ENCODE measurements at regions of chr2 and their contacts with region 1.

Region 1: GRCh38 chr2:199704358-199705238 is 146.4 kb downstream of the FTCDNL1 start:
- DNase-seq: peak; percentile 31
- H3K4me3 ChIP-seq: no peak overlapping the region
- H3K27ac ChIP-seq: no peak overlapping the region
- H3K4me1 ChIP-seq: no peaks in the 10 kb centered on the region
- H3K27me3 ChIP-seq: no peaks in the 10 kb centered on the region
- CTCF ChIP-seq: peak; percentile 64 to 78

Region 2: DNA sequence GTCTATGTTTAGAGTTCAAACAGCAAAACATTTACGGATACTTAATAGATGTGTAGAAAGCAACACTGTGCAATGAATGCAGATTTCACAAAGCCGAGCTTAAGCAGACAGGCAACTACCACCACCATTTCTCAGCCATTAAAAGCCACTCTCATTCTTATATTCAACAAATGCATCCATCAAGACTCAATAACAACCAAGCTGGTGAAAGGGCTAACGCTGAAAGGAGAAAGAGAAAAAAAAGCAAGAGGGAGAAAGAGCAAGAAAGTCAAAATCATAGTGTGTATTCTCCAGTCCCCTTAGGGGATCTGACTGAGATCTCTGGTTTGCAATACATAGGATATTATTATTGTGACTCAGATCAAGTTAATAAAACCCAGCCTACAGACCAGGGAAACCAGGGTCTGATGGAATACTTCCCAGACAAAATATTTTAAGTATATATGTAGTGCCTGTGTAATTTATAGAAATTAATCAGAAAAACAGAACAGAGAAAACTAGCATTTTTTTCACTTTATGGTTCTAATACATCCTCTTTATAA is 260.9 kb before region 1 on chr2:
- CTCF ChIA-PET with region 1: no interaction called
- dilution Hi-C with region 1: no loop called
- in situ Hi-C with region 1: no loop called
- intact Hi-C with region 1: no loop called
- DNase-seq: peak; percentile 42
- H3K4me3 ChIP-seq: no peak overlapping the region
- H3K27ac ChIP-seq: no peak overlapping the region
- H3K4me1 ChIP-seq: no peaks in the 10 kb centered on the region
- H3K27me3 ChIP-seq: no peaks in the 10 kb centered on the region
- CTCF ChIP-seq: no peak

Region 3: DNA sequence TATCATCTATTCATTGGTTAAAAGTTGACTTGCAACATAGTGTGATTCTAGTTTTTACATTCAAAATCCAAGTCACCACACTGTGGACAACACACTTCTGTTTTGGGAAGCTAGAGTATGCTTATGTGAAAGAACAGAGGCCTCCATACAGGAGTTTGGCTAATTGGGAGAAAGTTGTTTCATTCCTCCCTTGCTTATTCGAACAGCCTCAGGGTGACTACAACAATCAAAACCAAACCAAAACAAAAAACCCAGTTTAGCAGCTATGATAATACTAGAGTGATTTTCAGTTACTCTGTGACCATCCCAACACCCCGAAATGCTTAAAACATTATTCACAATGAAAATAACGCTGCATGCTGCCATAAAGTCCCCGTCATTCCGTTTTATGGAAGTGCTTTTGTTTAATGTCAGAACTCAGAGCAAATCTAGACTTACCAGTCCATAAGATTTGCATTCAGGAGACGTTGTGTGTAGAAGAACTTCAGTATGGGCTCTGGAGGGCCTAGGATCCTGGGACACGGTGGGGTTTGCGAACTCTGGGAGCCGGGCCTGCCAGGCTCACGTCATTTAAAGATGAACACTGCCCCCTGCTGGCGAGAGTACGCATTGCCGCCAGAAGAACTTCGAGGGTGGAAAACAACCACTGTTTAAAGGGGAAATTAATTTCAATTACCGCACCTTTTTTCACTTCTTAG is 35.0 kb after region 1 on chr2:
- CTCF ChIA-PET with region 1: no interaction called
- dilution Hi-C with region 1: no loop called
- in situ Hi-C with region 1: no loop called
- intact Hi-C with region 1: loop called (anchors 1 kb)
- DNase-seq: peak; percentile 8
- H3K4me3 ChIP-seq: no peak overlapping the region
- H3K27ac ChIP-seq: no peak overlapping the region
- H3K4me1 ChIP-seq: no peaks in the 10 kb centered on the region
- H3K27me3 ChIP-seq: no peaks in the 10 kb centered on the region
- CTCF ChIP-seq: peak; percentile 82 to 83

Region 4: DNA sequence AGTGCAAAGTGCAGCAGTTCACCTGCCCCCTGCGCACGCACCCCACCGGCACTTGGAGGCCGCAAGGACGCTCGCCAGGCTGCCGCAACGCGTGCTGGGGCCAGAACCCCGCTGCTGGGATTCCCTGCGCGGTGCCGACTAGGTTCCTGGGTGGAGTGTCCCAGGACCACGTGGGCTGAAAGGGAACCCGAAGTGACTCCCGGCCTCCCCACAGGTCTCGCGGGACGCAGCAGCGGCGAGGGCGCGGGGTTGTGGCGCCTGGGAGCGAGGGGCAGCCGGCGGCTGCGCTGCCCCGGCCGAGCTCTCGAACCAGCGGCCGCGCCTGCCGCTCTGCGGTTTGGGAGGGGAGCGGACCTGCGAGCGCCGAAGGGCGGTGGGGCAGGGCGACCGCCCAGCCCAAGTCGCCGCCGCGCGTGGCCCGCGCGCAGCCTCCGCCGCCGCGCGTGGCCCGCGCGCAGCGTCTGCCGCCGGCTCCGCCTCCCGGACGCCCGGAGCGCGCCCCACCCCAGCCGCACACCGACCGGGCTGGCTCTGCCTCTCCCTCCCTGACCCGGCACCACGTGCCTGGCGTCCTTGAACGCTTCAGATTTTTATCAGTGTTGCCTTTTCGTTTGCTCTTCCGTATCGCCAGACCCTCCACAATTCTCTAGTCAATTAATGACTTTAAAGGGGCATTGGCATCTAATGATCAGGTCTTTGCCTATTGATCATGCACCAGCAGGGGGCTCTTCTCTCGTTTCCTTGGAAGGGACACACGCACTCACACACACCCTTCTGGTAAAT is 146.3 kb after region 1 on chr2 and contains the start of gene FTCDNL1:
- CTCF ChIA-PET with region 1: no interaction called
- dilution Hi-C with region 1: no loop called
- in situ Hi-C with region 1: loop called in 1 of 2 experiments (anchors 25 kb)
- intact Hi-C with region 1: no loop called
- DNase-seq: peak; percentile 26
- H3K4me3 ChIP-seq: peak within 1 kb of the TSS; percentile 55 to 67 (median 65)
- H3K27ac ChIP-seq: no peak within 1 kb of the TSS
- H3K4me1 ChIP-seq: peaks cover 3% of the 10 kb centered on the region
- H3K27me3 ChIP-seq: peaks cover 7% of the 10 kb centered on the region
- CTCF ChIP-seq: peak; percentile 29 to 59
- total RNA-seq, gene FTCDNL1: 0.14 to 1.0 TPM

Region 5: DNA sequence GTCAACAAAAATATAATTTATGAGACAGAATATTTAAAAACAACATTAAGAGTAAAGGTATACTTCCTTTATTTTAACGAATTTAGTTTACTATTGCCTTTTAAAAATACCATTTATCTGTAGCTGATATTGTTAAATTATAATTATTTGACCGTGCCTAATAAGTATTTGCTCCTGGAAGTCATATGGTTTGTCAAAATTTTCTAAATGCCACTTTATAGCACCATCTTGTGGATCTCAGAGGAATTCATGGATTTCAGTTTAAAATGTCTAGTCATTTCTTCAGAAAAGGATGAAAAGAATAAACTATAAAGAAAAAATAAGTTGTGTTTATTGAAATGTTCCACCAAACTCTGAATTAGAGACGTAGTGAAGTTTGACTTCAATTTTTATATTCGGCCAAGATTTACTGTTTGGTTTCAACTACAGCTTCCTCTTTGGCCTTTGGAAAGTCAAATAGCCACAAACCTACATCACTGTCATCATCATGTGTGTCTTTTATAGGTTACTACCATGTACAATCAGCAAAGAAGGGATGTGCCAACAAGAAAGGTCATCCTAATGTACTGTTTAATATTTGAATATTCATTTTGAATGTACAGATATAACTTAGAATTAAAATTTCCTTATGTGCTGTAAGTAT is 156.7 kb after region 1 on chr2:
- CTCF ChIA-PET with region 1: no interaction called
- dilution Hi-C with region 1: no loop called
- in situ Hi-C with region 1: loop called in 1 of 2 experiments (anchors 25 kb)
- intact Hi-C with region 1: loop called (anchors 1 kb)
- DNase-seq: no peak
- H3K4me3 ChIP-seq: no peak overlapping the region
- H3K27ac ChIP-seq: no peak overlapping the region
- H3K4me1 ChIP-seq: no peaks in the 10 kb centered on the region
- H3K27me3 ChIP-seq: no peaks in the 10 kb centered on the region
- CTCF ChIP-seq: peak; percentile 56 to 57